CD4-positive, alpha-beta memory T cell (primary cell): ENCODE measurements at regions of chr4 and their contacts with region 1.

Region 1: GRCh38 chr4:169619959-169620879 is at the start of gene CLCN3:
- DNase-seq: peak; percentile 80 to 91 (median 83)
- H3K4me3 ChIP-seq: peak within 1 kb of the TSS; percentile 94 to 97
- H3K4me3 Mint-ChIP-seq: peak within 1 kb of the TSS; percentile 88 to 100 (median 96)
- H3K27ac ChIP-seq: peak within 1 kb of the TSS; percentile 87
- H3K27ac Mint-ChIP-seq: peak within 1 kb of the TSS; percentile 94 to 100 (median 99)
- H3K4me1 ChIP-seq: peaks cover 38% of the 10 kb centered on the region
- H3K4me1 Mint-ChIP-seq: peaks cover 36 to 72% (median 52%) of the 10 kb centered on the region in 4 donors
- H3K27me3 ChIP-seq: no peaks in the 10 kb centered on the region
- H3K27me3 Mint-ChIP-seq: no peaks in the 10 kb centered on the region
- total RNA-seq, gene CLCN3: 37.5 to 37.7 TPM

Region 2: GRCh38 chr4:169640261-169640870 is 20.1 kb after region 1 on chr4:
- CTCF ChIA-PET with region 1: interaction called, 3 read pairs
- POLR2A ChIA-PET with region 1: interaction called, 3 read pairs
- intact Hi-C with region 1: loop called (anchors 2 kb)
- DNase-seq: no peak
- H3K4me3 ChIP-seq: no peak overlapping the region
- H3K4me3 Mint-ChIP-seq: no peak overlapping the region
- H3K27ac ChIP-seq: no peak overlapping the region
- H3K27ac Mint-ChIP-seq: peak overlapping the region in 1 of 7 donors; percentile 27
- H3K4me1 ChIP-seq: no peaks in the 10 kb centered on the region
- H3K4me1 Mint-ChIP-seq: peaks cover 0 to 6% (median 3%) of the 10 kb centered on the region in 4 donors
- H3K27me3 ChIP-seq: no peaks in the 10 kb centered on the region
- H3K27me3 Mint-ChIP-seq: no peaks in the 10 kb centered on the region

Region 3: GRCh38 chr4:169659716-169660670 is 39.8 kb after region 1 on chr4:
- CTCF ChIA-PET with region 1: interaction called, 8 read pairs
- POLR2A ChIA-PET with region 1: interaction called, 15 read pairs
- intact Hi-C with region 1: loop called (anchors 1 kb)
- DNase-seq: peak; percentile 65 to 92 (median 80)
- H3K4me3 ChIP-seq: no peak overlapping the region
- H3K4me3 Mint-ChIP-seq: peak overlapping the region in 7 of 8 donors; percentile 37 to 87 (median 76)
- H3K27ac ChIP-seq: peak overlapping the region; percentile 22
- H3K27ac Mint-ChIP-seq: peak overlapping the region; percentile 85 to 99 (median 96)
- H3K4me1 ChIP-seq: peaks cover 24% of the 10 kb centered on the region
- H3K4me1 Mint-ChIP-seq: peaks cover 17 to 34% (median 26%) of the 10 kb centered on the region in 4 donors
- H3K27me3 ChIP-seq: no peaks in the 10 kb centered on the region
- H3K27me3 Mint-ChIP-seq: no peaks in the 10 kb centered on the region